ENCODE measurements at regions of chr12 and their contacts with region 1.

Region 1: DNA sequence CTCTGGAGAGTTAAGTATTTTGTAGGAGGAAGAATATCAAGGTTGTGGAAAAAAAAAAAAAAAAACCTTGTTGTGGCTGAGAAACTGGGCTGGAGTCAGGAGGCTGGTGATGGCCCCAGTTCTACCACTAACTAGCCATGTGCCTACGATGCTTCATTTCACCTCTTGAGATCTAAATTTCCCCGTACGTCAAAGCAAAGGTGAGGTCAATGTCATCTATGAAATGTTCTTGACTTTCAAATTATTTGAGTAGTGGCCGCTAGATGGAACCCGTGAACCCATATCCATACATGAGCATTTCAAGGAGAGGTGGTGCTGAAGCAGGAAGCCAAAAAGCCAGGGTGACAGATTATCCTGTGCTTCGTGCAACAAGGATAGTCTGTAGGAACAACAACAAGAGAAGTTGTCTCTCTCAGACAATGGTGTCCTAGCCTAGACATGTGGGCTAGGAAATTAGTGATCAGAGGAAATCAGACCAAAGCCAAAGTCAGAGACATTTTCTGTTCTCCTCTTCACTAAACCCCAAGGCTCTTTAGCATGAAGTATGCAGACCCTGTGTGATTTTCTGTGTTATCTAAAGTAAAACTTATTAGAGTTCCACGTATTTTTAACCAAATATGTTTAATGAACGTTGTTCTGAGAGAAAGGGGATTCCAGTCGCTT is 95.5 kb upstream of the ETV6 start:
- DNase-seq: no peak
- ATAC-seq: peak; percentile 79
- H3K4me3 Mint-ChIP-seq: no peak overlapping the region
- H3K27ac Mint-ChIP-seq: no peak overlapping the region
- H3K4me1 Mint-ChIP-seq: peaks cover 5% of the 10 kb centered on the region
- H3K27me3 Mint-ChIP-seq: peaks cover 5% of the 10 kb centered on the region
- CTCF ChIP-seq: peak; percentile 19

Region 2: DNA sequence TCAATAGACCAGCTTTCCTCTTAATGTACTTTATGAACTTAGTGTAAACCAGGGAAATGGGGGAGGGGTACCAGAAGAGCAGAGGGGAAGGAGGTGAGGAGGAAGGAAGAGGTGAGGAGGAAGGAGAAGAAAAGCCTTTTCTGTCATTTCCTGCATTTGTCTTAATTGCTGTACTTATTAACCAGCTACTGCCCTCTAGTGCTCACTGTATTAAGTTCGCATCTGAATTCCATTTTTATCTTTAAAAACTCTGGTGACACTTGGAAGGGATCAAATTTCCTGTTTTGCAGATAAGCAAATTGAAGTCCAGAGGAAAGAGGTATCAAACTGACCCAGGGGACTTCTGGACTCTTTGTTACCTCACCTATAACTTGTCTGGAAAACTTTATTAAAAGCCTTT is 773.8 kb after region 1 on chr12:
- CTCF ChIA-PET with region 1: interaction called, 12 read pairs
- POLR2A ChIA-PET with region 1: no interaction called
- intact Hi-C with region 1: loop called (anchors 1 kb)
- DNase-seq: no peak
- ATAC-seq: peak; percentile 31
- H3K4me3 Mint-ChIP-seq: no peak overlapping the region
- H3K27ac Mint-ChIP-seq: no peak overlapping the region
- H3K4me1 Mint-ChIP-seq: peaks cover 2% of the 10 kb centered on the region
- H3K27me3 Mint-ChIP-seq: peaks cover 2% of the 10 kb centered on the region
- CTCF ChIP-seq: no peak

Region 3: DNA sequence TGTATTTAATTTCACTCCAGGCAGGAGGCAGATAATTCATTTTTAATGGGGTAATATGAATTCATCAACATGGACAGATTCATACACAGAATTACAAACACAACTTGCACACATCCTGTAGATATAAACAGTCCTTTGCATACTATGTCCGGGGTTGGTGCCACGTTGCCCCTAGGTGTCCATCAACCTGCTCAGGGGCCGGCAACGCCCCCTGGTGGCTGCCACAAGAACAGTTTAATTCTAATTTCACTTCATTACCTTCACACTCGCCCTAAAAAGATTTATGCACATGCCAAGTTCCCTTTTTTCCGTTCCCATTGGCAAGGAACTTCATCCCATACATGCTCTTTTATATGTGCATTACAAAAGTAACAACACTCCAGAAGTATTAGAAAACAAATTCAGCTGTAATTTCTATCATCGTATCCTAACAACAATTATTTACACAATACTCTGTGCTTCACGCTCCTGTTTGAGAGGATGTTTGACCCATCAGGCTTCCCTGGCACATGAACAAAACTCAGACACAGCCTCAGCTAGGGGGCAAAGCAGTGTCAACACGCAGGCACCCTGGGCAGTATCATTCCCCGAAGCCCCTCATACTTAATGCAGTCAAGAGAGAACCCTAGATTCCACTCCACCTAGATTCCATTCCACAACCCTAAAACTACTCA is 780.5 kb after region 1 on chr12:
- CTCF ChIA-PET with region 1: interaction called, 12 read pairs
- POLR2A ChIA-PET with region 1: no interaction called
- intact Hi-C with region 1: loop called (anchors 2 kb)
- DNase-seq: peak; percentile 41
- ATAC-seq: peak; percentile 72
- H3K4me3 Mint-ChIP-seq: no peak overlapping the region
- H3K27ac Mint-ChIP-seq: no peak overlapping the region
- H3K4me1 Mint-ChIP-seq: peaks cover 9% of the 10 kb centered on the region
- H3K27me3 Mint-ChIP-seq: peaks cover 2% of the 10 kb centered on the region
- CTCF ChIP-seq: peak; percentile 58

Measured in activated B cell treated with CpG ODN at 0.5 μM for 24 hours (primary cell).